Activated T-helper 2 cell treated with anti-CD3 and anti-CD28 coated beads, Interferon-gamma antibody, Interleukin-2, Interleukin-4, amounts not matched to agents 10 μg/mL and 5 μg/mL and 100 μg/mL, durations not matched to agents 14 hours and 24 hours and 36 hours (primary cell): ENCODE measurements at regions of chr3 and their contacts with region 1.

Region 1: DNA sequence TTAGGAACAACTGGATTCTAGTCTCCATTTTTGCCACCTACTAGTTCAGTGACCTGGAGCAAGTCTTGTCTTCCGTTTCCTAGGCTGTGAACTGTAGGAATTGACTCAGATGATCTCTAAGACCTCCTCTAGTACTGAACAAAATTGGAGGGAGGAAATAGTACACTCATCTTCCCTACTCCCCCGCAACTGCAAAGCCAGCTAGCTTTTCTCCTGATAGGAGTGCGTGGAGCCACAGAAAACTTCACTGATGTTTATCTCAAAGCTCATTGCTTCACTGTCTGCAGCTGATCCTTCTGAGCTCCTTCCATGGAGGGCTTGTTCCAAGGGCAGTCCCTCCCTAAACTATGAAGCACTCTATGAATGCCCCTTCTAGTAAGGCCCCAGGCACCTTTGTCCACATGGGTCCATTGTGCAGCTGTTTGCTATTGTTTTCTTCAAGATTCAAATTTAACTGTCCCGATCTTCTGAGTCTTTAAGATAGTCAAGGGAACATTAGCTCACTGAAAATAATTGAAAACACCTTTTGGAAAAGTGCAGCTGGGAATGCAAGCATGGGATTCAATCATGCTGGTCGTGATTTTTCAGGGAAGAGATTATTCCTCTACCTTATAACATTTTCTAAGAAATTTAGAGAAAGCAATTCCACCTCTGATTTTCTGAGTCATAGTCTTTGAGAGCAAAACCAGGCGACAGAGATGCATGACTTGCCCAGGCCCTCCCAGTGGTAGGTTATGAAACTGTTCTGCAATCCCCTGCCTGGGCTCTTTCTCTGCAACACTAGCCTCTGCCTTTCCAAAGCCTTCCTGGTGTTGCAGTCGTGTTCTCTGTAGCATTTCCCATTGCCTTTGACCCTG is 24.3 kb downstream of the FILIP1L start:
- DNase-seq: no peak
- H3K4me3 Mint-ChIP-seq: peak overlapping the region; percentile 0
- H3K27ac Mint-ChIP-seq: peak overlapping the region; percentile 52
- H3K4me1 Mint-ChIP-seq: peaks cover 39% of the 10 kb centered on the region
- H3K27me3 Mint-ChIP-seq: peaks cover 1% of the 10 kb centered on the region

Region 2: GRCh38 chr3:99817437-99818240 is 272.4 kb before region 1 on chr3 and contains the start of gene CMSS1:
- intact Hi-C with region 1: loop called (anchors 1 kb)
- DNase-seq: peak; percentile 92
- H3K4me3 Mint-ChIP-seq: peak within 1 kb of the TSS; percentile 95
- H3K27ac Mint-ChIP-seq: peak within 1 kb of the TSS; percentile 96
- H3K4me1 Mint-ChIP-seq: peaks cover 42% of the 10 kb centered on the region
- H3K27me3 Mint-ChIP-seq: no peaks in the 10 kb centered on the region
- total RNA-seq, gene CMSS1: 138 and 143 TPM in 2 replicates

Region 3: GRCh38 chr3:99856437-99857220 is 233.4 kb before region 1 on chr3:
- intact Hi-C with region 1: loop called (anchors 1 kb)
- DNase-seq: no peak
- H3K4me3 Mint-ChIP-seq: no peak overlapping the region
- H3K27ac Mint-ChIP-seq: peak overlapping the region; percentile 89
- H3K4me1 Mint-ChIP-seq: peaks cover 70% of the 10 kb centered on the region
- H3K27me3 Mint-ChIP-seq: no peaks in the 10 kb centered on the region

Region 4: DNA sequence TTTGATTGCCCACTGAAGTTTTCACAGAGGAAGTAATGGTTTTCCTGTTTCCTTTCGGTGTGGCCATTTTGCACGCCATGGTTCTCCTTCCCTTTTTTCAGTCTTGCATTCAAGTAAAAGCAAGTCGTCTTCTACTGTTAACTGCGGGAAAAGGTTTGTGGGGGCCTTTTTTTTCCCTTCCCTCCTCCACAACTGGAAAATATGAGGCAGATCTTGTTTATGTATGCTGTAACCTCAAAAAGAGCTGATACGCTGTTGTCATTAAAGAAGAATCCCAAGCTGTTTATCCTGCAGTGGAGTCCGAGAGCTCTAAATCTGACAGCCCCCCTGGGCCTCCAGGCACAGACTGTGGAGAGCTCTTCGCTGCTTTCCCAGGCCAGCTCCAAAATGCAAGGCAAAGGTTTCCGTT is 16.1 kb before region 1 on chr3:
- intact Hi-C with region 1: loop called (anchors 1 kb)
- DNase-seq: no peak
- H3K4me3 Mint-ChIP-seq: peak overlapping the region; percentile 58
- H3K27ac Mint-ChIP-seq: peak overlapping the region; percentile 90
- H3K4me1 Mint-ChIP-seq: peaks cover 72% of the 10 kb centered on the region
- H3K27me3 Mint-ChIP-seq: no peaks in the 10 kb centered on the region

Region 5: GRCh38 chr3:100210772-100211135 is 120.7 kb after region 1 on chr3:
- intact Hi-C with region 1: loop called (anchors 5 kb)
- DNase-seq: no peak
- H3K4me3 Mint-ChIP-seq: no peak overlapping the region
- H3K27ac Mint-ChIP-seq: peak overlapping the region; percentile 64
- H3K4me1 Mint-ChIP-seq: peaks cover 21% of the 10 kb centered on the region
- H3K27me3 Mint-ChIP-seq: peaks cover 8% of the 10 kb centered on the region